Transverse colon (tissue), 4 donors: ENCODE measurements at regions of chrX and their contacts with region 1.

Region 1: DNA sequence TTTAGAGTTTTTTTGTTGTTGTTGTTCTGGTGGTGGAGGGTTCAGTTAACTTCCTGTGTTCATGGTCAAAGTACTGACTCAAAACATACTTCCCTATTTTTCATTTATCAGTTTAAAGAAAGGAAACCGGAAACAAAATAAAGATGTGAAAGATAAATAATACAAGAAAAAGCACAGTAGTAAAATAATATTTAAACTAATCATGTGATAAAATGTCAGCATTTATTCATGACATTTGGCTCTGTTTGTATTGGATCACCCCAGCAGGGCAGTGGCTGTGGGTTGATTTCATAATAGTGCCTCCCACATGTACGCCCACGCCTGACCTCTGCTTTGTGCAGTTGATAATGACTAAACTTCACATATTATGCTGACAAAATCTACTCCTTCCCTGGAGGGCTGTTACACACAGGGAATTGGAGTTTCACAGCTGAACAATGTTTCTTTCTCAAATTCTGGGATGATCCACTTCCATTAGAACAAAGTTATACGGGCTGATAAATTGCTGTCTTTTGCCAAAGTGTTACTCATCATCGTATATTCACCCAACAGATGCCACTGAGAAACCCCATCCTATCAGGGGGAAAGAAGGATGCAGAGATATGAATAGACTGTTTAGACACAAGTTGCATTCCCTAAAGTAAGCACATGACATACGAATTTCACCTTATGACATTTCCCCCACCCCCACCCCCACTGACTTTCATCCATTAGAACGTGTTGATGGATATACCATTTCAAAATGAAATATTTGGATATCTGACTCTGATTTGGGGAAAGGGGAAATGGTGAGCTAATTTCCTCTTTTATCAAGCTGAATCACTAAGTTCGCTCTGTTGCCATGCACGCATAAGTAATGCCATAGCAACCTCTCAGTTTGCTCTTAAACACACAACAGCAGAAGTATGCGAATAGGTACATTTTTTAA is 48.3 kb downstream of the AMELX start:
- DNase-seq: peak; percentile 31
- H3K4me3 ChIP-seq: no peak overlapping the region
- H3K27ac ChIP-seq: peak overlapping the region in 3 of 4 donors; percentile 4 to 37 (median 29)
- H3K4me1 ChIP-seq: no peaks in the 10 kb centered on the region
- H3K27me3 ChIP-seq: no peaks in the 10 kb centered on the region
- CTCF ChIP-seq: no peak
- EP300 ChIP-seq: no peak
- POLR2A ChIP-seq: no peak

Region 2: DNA sequence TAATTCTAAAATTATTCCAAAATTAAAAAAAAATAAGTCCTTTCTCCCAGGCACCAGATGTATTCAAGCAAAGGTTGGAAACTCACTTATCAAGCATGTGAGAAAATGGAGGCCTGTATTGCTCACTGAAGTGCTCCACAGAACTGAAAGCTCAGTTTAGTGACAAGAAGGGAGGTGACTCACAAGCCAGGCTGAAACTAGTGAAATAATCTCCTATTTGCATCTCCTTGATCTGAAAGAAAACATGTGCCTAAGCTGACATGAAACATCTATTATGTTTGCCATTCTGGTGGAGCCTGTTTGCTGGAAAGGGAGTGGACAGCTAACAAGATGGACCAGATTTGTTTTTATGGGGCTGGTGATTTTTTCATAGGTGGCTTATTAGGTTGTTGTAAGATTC is 102.3 kb before region 1 on chrX:
- in situ Hi-C with region 1: loop called in 1 of 4 experiments (anchors 25 kb)
- intact Hi-C with region 1: no loop called
- DNase-seq: no peak
- H3K4me3 ChIP-seq: no peak overlapping the region
- H3K27ac ChIP-seq: no peak overlapping the region
- H3K4me1 ChIP-seq: peaks cover 0 to 4% (median 0%) of the 10 kb centered on the region in 4 donors
- H3K27me3 ChIP-seq: no peaks in the 10 kb centered on the region
- CTCF ChIP-seq: no peak
- EP300 ChIP-seq: no peak
- POLR2A ChIP-seq: no peak